ENCODE measurements at regions of chr5 and their contacts with region 1.

Region 1: DNA sequence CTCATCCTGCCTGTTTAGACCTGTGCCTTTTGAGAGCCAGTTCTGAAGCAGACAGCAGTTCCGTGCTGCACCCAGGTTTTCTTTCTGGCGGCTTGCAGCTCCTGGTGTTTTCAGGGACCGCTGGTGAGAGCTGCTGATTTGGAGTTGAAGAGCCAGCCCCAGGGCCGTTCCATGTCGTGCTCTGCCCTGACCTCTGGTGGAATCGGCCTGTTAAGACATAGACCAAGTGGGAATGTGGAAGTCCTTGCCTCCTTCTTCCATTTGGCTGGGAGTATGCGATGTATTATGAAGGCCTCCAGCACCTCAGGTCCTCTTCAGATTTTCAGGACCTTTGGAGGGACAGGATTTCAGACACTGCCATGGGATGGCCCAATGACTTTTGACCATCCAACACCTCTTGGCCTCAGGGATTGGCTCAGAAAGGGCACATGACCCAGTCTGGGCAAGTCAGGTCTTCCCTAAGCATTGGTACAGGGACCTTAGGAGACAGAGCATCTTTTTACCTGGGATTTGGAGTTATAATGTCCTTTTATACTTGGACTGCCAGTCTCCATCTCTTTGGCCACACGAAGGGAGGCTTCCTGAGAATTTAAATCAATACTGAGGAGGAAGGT is 136.1 kb upstream of the CLINT1 start:
- H3K4me3 ChIP-seq: no peak overlapping the region
- H3K27ac ChIP-seq: no peak overlapping the region
- H3K4me1 ChIP-seq: 0 out of 2 replicates have a peak, but pooled peaks cover 2% of the 10 kb centered on the region
- CTCF ChIP-seq: peak; percentile 55

Region 2: DNA sequence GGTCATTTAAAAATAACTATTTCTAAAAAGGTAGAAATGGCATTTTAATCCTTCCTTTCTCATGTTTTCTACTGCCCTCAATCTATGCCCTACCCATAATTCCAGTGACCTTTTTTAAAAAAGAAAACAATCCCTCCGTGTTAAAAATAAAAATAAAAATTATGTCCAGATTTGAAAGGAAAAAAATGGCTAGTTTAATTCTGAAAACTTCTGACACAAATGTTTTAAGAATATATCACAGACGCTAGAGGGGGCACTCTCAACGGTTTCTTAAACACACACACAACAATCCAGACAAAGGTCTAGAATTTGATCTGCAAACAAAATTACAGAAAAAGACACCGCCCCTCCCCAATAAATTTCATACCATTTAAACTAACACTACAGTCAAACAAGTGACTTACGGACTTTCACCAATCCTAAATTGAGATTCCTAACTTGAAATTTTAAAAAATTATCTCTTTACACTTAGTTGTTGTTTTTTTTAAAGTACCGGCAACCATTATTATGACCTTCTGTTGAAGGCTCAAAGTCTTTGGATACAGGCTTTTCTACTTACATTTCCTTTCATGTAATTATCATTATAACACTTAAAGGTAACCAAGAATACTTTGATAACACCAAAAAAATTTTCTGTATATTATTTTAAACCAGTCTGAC is 174.3 kb before region 1 on chr5:
- CTCF ChIA-PET with region 1: interaction called, 32 read pairs
- POLR2A ChIA-PET with region 1: no interaction called
- H3K4me3 ChIP-seq: no peak overlapping the region
- H3K27ac ChIP-seq: peak overlapping the region; percentile 7; the same call in 1 of the 2 replicates
- H3K4me1 ChIP-seq: peaks cover 9% of the 10 kb centered on the region
- CTCF ChIP-seq: no peak

Region 3: DNA sequence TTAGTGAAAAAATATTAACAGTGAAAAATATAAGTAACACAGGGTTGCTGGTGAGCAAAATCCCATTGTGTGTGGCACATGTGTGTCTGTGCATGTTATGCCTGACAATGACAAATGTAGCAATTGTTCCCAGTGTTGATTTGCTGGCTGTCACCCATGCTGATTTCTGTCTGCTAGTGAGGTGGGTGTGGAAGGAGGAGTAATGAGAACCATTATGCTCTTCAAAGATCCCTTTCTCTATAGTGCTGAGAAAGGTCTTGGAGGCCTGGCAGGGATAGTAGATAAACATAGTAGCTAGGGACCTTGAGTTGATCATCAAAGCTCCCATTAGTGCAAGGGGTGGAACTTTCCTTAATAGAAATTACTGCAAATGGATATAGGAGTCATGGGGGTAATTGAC is 16.4 kb after region 1 on chr5:
- CTCF ChIA-PET with region 1: interaction called, 11 read pairs
- POLR2A ChIA-PET with region 1: no interaction called
- H3K4me3 ChIP-seq: no peak overlapping the region
- H3K27ac ChIP-seq: no peak overlapping the region
- H3K4me1 ChIP-seq: no peaks in the 10 kb centered on the region
- CTCF ChIP-seq: no peak